Head of caudate nucleus (tissue), 42 donors: ENCODE measurements at regions of chr2 and their contacts with region 1.

Region 1: GRCh38 chr2:86216577-86217555 is 17.6 kb downstream of the MRPL35 start:
- DNase-seq: peak in 38 of 42 donors; percentile 27 to 81 (median 56)

Region 2: DNA sequence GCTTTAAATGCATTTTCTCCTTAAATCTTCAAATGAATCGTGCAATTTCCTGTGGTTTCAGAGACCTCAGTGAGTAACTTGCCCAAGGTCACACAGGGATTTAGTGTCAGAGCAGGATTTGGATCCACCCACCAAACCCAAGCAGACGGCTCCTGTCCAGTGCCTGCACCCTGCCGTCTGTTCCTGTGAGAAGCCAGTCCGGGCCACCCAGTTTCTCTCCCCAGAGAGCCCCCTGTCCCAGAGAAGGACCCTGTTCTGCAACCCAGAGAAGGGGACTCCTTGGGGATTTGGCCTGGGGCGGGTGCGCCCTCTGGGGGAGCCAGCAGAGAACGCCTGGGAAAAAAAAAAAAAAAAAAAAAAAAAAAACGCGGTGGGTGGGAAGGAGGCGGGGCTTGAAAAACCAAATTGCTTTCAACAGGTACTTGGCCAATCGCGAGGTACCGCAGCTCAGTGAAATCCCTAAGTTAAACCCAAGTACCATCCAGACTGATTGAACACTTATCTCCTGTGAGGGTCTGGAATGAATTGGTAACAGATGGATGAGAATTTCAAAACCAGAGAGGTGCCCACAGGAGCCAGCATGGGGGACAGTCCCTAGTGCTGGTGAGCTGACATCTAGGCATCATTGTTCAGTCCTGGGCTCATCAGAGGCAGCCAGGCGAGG is 151.4 kb after region 1 on chr2:
- intact Hi-C with region 1: loop called (anchors 10 kb)
- DNase-seq: peak in 39 of 42 donors; percentile 16 to 77 (median 47)